ENCODE measurements at regions of chr12 and their contacts with region 1.

Region 1: GRCh38 chr12:6533923-6534694 is at the start of gene GAPDH:
- DNase-seq: peak; percentile 85 to 89 (median 88)
- H3K4me3 ChIP-seq: peak within 1 kb of the TSS; percentile 79 to 81
- H3K4me3 Mint-ChIP-seq: peak within 1 kb of the TSS; percentile 90 to 98 (median 94)
- H3K27ac ChIP-seq: peak within 1 kb of the TSS; percentile 86
- H3K27ac Mint-ChIP-seq: peak within 1 kb of the TSS; percentile 88 to 99 (median 99)
- H3K4me1 ChIP-seq: peaks cover 62% of the 10 kb centered on the region
- H3K4me1 Mint-ChIP-seq: peaks cover 30 to 67% (median 45%) of the 10 kb centered on the region in 4 donors
- H3K27me3 ChIP-seq: no peaks in the 10 kb centered on the region
- H3K27me3 Mint-ChIP-seq: no peaks in the 10 kb centered on the region
- total RNA-seq, gene GAPDH: 474 to 495 TPM

Region 2: GRCh38 chr12:6323340-6323994 is 210.6 kb before region 1 on chr12:
- CTCF ChIA-PET with region 1: interaction called, 10 read pairs
- POLR2A ChIA-PET with region 1: interaction called, 12 read pairs
- intact Hi-C with region 1: loop called (anchors 1 kb)
- DNase-seq: peak; percentile 47 to 66 (median 52)
- H3K4me3 ChIP-seq: peak overlapping the region in 1 of 2 donors; percentile 3
- H3K4me3 Mint-ChIP-seq: peak overlapping the region; percentile 76 to 90 (median 82)
- H3K27ac ChIP-seq: no peak overlapping the region
- H3K27ac Mint-ChIP-seq: peak overlapping the region; percentile 80 to 96 (median 94)
- H3K4me1 ChIP-seq: peaks cover 32% of the 10 kb centered on the region
- H3K4me1 Mint-ChIP-seq: peaks cover 26 to 53% (median 34%) of the 10 kb centered on the region in 4 donors
- H3K27me3 ChIP-seq: no peaks in the 10 kb centered on the region
- H3K27me3 Mint-ChIP-seq: no peaks in the 10 kb centered on the region

Region 3: DNA sequence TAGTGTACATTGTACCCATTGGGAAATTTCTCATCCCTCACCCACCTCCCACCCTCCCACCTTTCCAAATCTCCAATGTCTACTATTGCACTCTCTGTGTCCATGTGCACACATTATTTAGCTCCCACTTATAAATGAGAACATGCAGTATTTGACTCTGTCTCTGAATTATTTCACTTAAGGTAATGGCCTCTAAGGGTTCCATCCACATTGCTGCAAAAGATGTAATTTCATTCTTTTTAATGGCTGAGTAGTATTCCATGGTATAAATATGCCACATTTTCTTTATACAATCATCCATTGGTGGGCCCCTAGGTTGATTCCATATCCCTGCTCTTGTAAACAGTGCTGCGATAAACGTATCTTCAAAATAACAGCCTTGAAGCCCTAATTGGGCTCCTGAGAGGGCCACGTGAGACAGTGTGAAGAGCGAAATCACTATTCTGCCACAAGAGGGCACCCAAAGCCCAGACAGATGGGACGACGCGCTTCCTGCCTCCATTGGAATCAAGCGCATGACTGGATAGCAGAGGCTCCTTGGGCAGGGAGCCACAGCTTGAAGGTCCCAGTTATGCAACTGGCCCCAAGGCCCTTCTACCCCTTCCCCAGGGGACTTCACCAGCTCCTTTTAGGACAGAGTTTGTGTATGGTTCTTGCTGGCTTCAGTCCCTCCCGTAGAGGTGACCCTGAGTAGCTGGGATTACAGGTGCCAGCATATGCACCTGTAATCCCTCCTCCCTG is 110.7 kb before region 1 on chr12:
- CTCF ChIA-PET with region 1: interaction called, 162 read pairs
- POLR2A ChIA-PET with region 1: interaction called, 85 read pairs
- intact Hi-C with region 1: loop called (anchors 1 kb)
- DNase-seq: peak; percentile 83 to 86 (median 85)
- H3K4me3 ChIP-seq: no peak overlapping the region
- H3K4me3 Mint-ChIP-seq: peak overlapping the region in 6 of 8 donors; percentile 12 to 56 (median 31)
- H3K27ac ChIP-seq: peak overlapping the region; percentile 8
- H3K27ac Mint-ChIP-seq: peak overlapping the region; percentile 68 to 90 (median 82)
- H3K4me1 ChIP-seq: peaks cover 42% of the 10 kb centered on the region
- H3K4me1 Mint-ChIP-seq: peaks cover 28 to 38% (median 33%) of the 10 kb centered on the region in 4 donors
- H3K27me3 ChIP-seq: no peaks in the 10 kb centered on the region
- H3K27me3 Mint-ChIP-seq: peaks cover 0 to 6% of the 10 kb centered on the region in 2 donors

Region 4: DNA sequence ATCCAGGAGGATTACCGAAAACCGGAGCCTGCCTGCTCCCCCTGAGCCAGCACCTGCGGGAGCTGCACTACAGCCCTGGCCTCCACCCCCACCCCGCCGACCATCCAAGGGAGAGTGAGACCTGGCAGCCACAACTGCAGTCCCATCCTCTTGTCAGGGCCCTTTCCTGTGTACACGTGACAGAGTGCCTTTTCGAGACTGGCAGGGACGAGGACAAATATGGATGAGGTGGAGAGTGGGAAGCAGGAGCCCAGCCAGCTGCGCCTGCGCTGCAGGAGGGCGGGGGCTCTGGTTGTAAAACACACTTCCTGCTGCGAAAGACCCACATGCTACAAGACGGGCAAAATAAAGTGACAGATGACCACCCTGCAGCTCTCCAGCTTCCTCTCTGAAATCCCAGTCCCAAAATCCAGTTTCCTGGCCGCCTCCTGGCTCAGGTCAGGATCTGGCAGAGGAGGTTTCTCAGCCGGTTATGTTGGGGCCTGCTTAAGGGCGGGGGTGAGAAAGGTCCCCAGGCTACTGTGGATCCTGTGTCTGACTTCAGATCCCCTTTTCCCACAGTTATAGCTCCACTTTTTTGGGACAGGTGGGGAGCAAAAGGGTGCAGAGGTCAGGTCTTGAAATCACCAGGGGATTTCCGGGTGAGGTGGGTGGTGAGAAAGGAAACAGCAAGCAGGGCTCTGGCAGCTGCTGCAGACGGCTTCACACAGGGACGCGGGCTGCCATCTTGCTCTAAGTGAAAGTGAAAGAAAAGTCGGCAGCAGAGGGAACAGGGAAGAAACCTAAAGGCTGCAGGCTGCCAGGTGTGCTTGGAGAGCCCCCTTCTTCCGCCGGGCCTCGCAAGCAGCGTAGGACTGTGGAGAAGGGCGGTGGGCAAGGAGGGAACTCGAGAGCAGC is 82.5 kb before region 1 on chr12 and contains the start of gene TAPBPL:
- CTCF ChIA-PET with region 1: interaction called, 134 read pairs
- POLR2A ChIA-PET with region 1: interaction called, 78 read pairs
- intact Hi-C with region 1: no loop called
- DNase-seq: peak; percentile 85 to 94 (median 86)
- H3K4me3 ChIP-seq: peak within 1 kb of the TSS; percentile 80
- H3K4me3 Mint-ChIP-seq: peak within 1 kb of the TSS; percentile 96 to 100 (median 98)
- H3K27ac ChIP-seq: peak within 1 kb of the TSS; percentile 99
- H3K27ac Mint-ChIP-seq: peak within 1 kb of the TSS; percentile 95 to 99 (median 99)
- H3K4me1 ChIP-seq: peaks cover 68% of the 10 kb centered on the region
- H3K4me1 Mint-ChIP-seq: peaks cover 45 to 79% (median 64%) of the 10 kb centered on the region in 4 donors
- H3K27me3 ChIP-seq: no peaks in the 10 kb centered on the region
- H3K27me3 Mint-ChIP-seq: no peaks in the 10 kb centered on the region
- total RNA-seq, gene TAPBPL: 66.4 to 66.9 TPM

Region 5: DNA sequence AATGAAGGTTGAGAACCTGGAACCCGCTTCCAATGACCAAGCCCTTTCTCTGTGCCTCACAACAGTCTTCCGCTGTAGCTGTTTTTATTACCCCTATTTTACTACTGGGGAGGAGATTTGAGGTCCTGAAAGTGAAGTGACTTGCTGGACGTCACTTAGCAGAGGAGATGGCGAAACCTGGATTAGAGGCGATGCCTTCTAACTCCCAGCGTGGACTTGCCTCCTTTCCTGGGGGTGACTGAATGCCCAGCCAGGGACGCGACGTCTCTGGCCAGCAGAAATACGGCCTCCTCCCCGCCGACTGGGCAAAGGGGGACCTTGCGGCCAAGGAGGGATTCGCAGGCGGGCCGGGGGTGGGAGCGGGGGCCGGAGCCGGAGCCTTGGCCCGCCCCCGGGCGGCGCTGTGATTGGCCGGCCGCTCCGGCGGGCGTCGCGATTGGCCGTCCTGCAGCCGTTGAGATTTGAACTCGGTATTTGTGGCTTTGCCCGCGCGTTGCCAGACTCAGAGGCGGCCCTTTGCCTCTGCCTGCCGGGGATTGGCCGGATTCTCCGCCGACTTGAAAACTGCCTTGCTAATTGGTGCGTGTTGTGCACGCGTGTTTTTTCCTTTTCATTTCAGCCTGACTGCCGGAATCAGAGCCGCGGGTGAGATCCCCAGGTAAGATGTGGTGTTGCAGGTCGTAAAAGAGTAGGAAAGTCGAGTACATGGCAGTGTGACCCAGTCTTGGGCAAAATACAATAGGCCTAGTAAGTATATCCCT is 40.4 kb before region 1 on chr12 and contains the start of gene NCAPD2:
- CTCF ChIA-PET with region 1: interaction called, 24 read pairs
- POLR2A ChIA-PET with region 1: interaction called, 97 read pairs
- intact Hi-C with region 1: loop called (anchors 1 kb)
- DNase-seq: peak; percentile 96 to 97 (median 96)
- H3K4me3 ChIP-seq: peak within 1 kb of the TSS; percentile 98 to 99
- H3K4me3 Mint-ChIP-seq: peak within 1 kb of the TSS; percentile 89 to 98 (median 96)
- H3K27ac ChIP-seq: peak within 1 kb of the TSS; percentile 87
- H3K27ac Mint-ChIP-seq: peak within 1 kb of the TSS; percentile 90 to 99 (median 97)
- H3K4me1 ChIP-seq: peaks cover 37% of the 10 kb centered on the region
- H3K4me1 Mint-ChIP-seq: peaks cover 26 to 46% (median 35%) of the 10 kb centered on the region in 4 donors
- H3K27me3 ChIP-seq: no peaks in the 10 kb centered on the region
- H3K27me3 Mint-ChIP-seq: no peaks in the 10 kb centered on the region
- total RNA-seq, gene NCAPD2: 38.1 to 39.8 TPM

Region 6: GRCh38 chr12:6563448-6564050 is 29.4 kb after region 1 on chr12:
- CTCF ChIA-PET with region 1: interaction called, 26 read pairs
- POLR2A ChIA-PET with region 1: interaction called, 7 read pairs
- intact Hi-C with region 1: no loop called
- DNase-seq: peak; percentile 55 to 62 (median 58)
- H3K4me3 ChIP-seq: no peak overlapping the region
- H3K4me3 Mint-ChIP-seq: peak overlapping the region in 1 of 8 donors; percentile 57
- H3K27ac ChIP-seq: no peak overlapping the region
- H3K27ac Mint-ChIP-seq: peak overlapping the region in 6 of 7 donors; percentile 57 to 90 (median 68)
- H3K4me1 ChIP-seq: peaks cover 33% of the 10 kb centered on the region
- H3K4me1 Mint-ChIP-seq: peaks cover 19 to 48% (median 36%) of the 10 kb centered on the region in 4 donors
- H3K27me3 ChIP-seq: no peaks in the 10 kb centered on the region
- H3K27me3 Mint-ChIP-seq: no peaks in the 10 kb centered on the region

Measured in CD4-positive, alpha-beta memory T cell (primary cell).